Activated T-helper 1 cell treated with anti-CD3 and anti-CD28 coated beads, Interleukin-12 subunit alpha, Interleukin-12 subunit beta, Interleukin-2, Interleukin-4 antibody, amounts not matched to agents 30 ng/mL and 10 ng/mL and 1 ng/mL, durations not matched to agents 14 hours and 24 hours and 36 hours (primary cell): ENCODE measurements at regions of chr15 and their contacts with region 1.

Region 1: DNA sequence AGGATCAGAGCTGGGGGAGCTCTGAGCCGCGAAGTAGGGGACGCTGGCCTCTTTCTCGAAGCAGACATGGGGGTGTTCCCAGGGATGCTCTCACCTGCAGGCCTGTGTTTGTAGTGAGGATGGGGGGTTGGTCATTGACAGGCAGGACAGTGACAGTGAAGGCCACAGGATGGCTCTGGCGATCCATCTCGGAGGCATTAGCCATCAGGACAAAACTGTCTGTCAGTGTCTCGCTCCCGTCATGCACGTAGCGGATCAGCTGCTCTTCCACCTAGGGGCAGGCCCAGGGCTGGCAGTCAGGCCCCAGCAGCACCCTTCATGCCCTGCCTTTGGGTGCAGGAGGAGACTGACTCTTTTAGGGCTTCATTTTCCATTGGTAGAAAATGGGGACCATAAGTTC is 28.0 kb downstream of the CSPG4 start:
- DNase-seq: no peak
- H3K4me3 Mint-ChIP-seq: no peak overlapping the region
- H3K27ac Mint-ChIP-seq: no peak overlapping the region
- H3K4me1 Mint-ChIP-seq: no peaks in the 10 kb centered on the region
- H3K27me3 Mint-ChIP-seq: no peaks in the 10 kb centered on the region

Region 2: DNA sequence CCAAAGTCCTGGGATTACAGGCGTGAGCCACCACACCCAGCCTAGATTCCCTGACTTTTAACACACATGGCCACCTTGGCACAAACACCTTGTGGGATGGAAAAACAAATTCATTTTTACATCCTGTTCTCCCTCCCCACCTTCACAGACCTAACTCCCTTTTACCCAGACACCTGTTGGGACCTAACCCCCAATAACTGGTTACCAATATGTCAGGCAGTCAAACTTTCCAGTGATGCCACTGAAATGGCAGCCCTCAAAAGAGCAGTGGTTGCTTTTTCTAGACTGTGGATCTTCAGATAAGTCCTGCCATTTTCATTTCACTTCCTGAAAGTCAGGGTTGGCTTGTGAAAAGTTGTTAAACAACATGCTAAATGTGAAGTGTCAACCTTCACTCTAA is 268.1 kb before region 1 on chr15:
- intact Hi-C with region 1: no loop called
- DNase-seq: no peak
- H3K4me3 Mint-ChIP-seq: no peak overlapping the region
- H3K27ac Mint-ChIP-seq: peak overlapping the region; percentile 60
- H3K4me1 Mint-ChIP-seq: peaks cover 8% of the 10 kb centered on the region
- H3K27me3 Mint-ChIP-seq: no peaks in the 10 kb centered on the region

Region 3: GRCh38 chr15:75508840-75509532 is 175.7 kb before region 1 on chr15:
- intact Hi-C with region 1: loop called (anchors 1 kb)
- DNase-seq: peak; percentile 4
- H3K4me3 Mint-ChIP-seq: no peak overlapping the region
- H3K27ac Mint-ChIP-seq: no peak overlapping the region
- H3K4me1 Mint-ChIP-seq: no peaks in the 10 kb centered on the region
- H3K27me3 Mint-ChIP-seq: no peaks in the 10 kb centered on the region

Region 4: GRCh38 chr15:75597667-75598341 is 86.8 kb before region 1 on chr15:
- intact Hi-C with region 1: loop called (anchors 1 kb)
- DNase-seq: peak; percentile 40
- H3K4me3 Mint-ChIP-seq: peak overlapping the region; percentile 71
- H3K27ac Mint-ChIP-seq: peak overlapping the region; percentile 89
- H3K4me1 Mint-ChIP-seq: peaks cover 36% of the 10 kb centered on the region
- H3K27me3 Mint-ChIP-seq: no peaks in the 10 kb centered on the region

Region 5: DNA sequence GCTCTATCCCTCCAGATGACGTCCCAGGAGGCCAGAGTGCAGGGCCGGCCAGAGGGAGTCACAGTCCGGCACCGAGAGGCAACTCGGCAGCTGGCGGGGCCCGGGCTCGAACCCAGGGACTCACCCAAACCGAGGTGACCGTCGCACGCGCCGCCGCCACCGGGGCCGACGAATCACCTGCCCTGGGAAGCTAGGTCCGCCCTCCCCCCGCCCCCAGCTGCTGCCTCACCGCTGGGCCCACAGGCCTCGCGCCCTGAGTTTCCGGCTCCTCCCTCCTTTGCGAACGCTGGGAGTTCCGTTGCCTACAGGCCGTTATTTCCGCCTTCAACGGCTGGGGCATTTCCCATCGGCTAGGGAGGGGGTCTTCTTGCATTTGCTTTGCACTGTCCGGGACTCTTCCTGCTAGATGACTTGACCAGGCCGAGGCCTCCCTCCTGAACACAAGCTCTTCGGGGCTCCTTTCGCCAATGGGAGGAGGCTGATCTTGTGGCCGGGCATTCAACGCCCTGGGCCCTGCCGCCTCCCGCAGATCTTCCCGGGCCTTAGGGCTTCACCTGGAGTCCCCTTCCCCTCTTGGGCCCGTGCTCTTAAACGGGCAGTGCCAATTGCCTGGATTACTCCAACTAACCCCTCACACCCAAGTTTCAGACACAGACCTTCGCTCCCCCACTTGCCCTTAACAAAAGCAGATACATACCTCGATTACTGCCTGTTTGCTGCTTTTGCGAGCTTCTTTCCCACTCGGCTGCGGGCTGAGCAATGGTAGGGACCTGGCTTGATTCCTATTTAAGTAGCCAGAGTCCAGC is 58.9 kb before region 1 on chr15 and contains the start of gene SNUPN:
- intact Hi-C with region 1: no loop called
- DNase-seq: peak; percentile 90
- H3K4me3 Mint-ChIP-seq: peak within 1 kb of the TSS; percentile 94
- H3K27ac Mint-ChIP-seq: peak within 1 kb of the TSS; percentile 100
- H3K4me1 Mint-ChIP-seq: peaks cover 38% of the 10 kb centered on the region
- H3K27me3 Mint-ChIP-seq: no peaks in the 10 kb centered on the region
- total RNA-seq, gene SNUPN: 30.8 and 34.1 TPM in 2 replicates

Region 6: DNA sequence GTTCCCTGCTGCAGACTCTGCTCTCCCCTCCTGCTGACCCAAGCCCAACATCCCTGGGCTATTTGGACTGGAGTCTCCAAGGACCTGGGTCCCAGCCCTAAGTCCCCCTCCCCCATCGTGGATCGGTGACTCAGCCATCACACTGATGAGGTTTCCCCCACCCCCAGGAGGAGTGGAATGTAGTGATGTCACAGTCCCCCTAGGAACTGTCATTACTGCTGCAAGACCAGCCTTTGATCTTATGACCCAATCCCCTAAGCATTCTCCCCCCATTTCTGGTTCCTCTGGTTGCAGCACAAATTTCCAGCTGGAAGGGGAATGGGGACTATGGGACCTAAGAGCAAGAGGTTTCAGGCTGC is 91.4 kb after region 1 on chr15:
- intact Hi-C with region 1: no loop called
- DNase-seq: no peak
- H3K4me3 Mint-ChIP-seq: no peak overlapping the region
- H3K27ac Mint-ChIP-seq: no peak overlapping the region
- H3K4me1 Mint-ChIP-seq: peaks cover 21% of the 10 kb centered on the region
- H3K27me3 Mint-ChIP-seq: peaks cover 19% of the 10 kb centered on the region